B cell (primary cell): ENCODE measurements at regions of chr17 and their contacts with region 1.

Region 1: DNA sequence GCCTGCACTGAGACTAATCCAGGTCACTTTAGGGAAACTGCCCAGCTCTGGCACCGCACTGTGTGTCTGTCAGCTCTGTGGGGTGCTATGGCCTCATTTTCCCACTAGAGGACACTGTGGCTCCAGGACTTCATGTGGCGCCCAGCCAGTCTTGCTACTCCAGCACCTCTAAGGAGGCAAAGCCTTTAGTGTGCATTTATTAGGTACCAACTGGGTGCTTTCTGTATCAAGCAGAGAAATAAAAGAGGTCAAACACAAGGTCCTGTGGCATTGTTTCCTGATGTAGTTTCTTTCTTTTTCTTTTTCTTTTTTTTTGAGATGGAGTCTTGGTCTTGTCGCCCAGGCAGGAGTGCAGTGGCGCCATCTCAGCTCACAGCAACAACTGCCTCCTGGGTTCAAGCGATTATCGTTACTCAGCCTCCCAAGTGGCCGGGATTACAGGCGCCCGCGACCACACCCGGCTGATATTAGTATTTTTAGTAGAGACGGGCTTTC is 12.5 kb upstream of the RHBDL3 start:
- DNase-seq: peak; percentile 76
- ATAC-seq: peak; percentile 93
- H3K4me3 ChIP-seq: no peak overlapping the region
- H3K4me3 Mint-ChIP-seq: no peak overlapping the region
- H3K27ac ChIP-seq: no peak overlapping the region
- H3K27ac Mint-ChIP-seq: no peak overlapping the region
- H3K4me1 ChIP-seq: no peaks in the 10 kb centered on the region
- H3K4me1 Mint-ChIP-seq: no peaks in the 10 kb centered on the region
- H3K27me3 ChIP-seq: no peaks in the 10 kb centered on the region
- H3K27me3 Mint-ChIP-seq: peaks cover 13% of the 10 kb centered on the region
- CTCF ChIP-seq: peak; percentile 97

Region 2: DNA sequence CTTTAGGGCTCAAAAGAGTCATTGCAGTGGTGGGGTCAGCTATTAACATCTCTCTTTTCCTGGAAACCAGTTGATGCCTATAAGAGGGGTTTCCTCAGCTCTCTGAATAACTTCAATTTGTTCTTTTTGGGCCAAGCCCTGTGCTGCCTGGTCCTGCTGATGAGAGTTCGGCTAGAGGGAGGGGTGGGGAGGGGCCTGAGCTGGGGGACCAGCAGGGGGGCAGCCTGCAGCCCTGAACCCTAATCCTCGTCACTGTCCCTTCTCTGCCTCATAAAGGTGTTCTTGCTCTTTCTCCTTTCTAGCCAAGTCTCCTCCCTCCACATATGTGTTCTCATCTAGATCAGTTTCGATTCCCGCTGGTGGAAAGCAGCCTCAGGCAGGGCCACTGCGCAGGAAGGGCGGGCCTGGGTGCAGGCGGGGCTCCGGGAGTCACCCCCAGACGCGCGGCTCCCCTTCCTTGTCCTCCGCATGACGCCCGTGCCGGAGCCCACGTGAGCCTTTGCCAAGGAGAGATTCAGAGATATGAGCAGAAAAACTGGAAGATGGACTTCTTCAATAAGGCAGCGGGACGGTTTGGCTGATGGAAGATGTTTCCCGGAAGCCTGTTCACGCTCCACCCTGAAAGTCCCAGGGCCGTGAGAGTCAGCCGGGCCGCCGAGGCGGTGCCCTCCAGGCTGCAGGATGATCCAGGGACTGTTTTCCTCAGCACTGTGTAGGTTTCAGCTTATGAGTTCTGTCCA is 125.8 kb before region 1 on chr17:
- CTCF ChIA-PET with region 1: no interaction called
- POLR2A ChIA-PET with region 1: no interaction called
- intact Hi-C with region 1: no loop called
- DNase-seq: peak; percentile 79
- ATAC-seq: peak; percentile 96
- H3K4me3 ChIP-seq: peak overlapping the region; percentile 68 to 77 (median 70)
- H3K4me3 Mint-ChIP-seq: peak overlapping the region; percentile 90
- H3K27ac ChIP-seq: peak overlapping the region; percentile 54 to 74
- H3K27ac Mint-ChIP-seq: peak overlapping the region; percentile 90
- H3K4me1 ChIP-seq: peaks cover 14 to 18% of the 10 kb centered on the region in 2 donors
- H3K4me1 Mint-ChIP-seq: peaks cover 20% of the 10 kb centered on the region
- H3K27me3 ChIP-seq: no peaks in the 10 kb centered on the region
- H3K27me3 Mint-ChIP-seq: no peaks in the 10 kb centered on the region
- CTCF ChIP-seq: no peak

Region 3: GRCh38 chr17:32349854-32350665 is 96.9 kb after region 1 on chr17 and contains the start of gene ZNF207:
- CTCF ChIA-PET with region 1: no interaction called
- POLR2A ChIA-PET with region 1: no interaction called
- intact Hi-C with region 1: loop called (anchors 1 kb)
- DNase-seq: peak; percentile 98
- ATAC-seq: peak; percentile 98
- H3K4me3 ChIP-seq: peak within 1 kb of the TSS; percentile 56 to 97 (median 89)
- H3K4me3 Mint-ChIP-seq: peak within 1 kb of the TSS; percentile 99
- H3K27ac ChIP-seq: peak within 1 kb of the TSS; percentile 86 to 98
- H3K27ac Mint-ChIP-seq: peak within 1 kb of the TSS; percentile 100
- H3K4me1 ChIP-seq: peaks cover 28 to 32% of the 10 kb centered on the region in 2 donors
- H3K4me1 Mint-ChIP-seq: peaks cover 35% of the 10 kb centered on the region
- H3K27me3 ChIP-seq: no peaks in the 10 kb centered on the region
- H3K27me3 Mint-ChIP-seq: no peaks in the 10 kb centered on the region
- CTCF ChIP-seq: no peak
- total RNA-seq, gene ZNF207: 314 and 332 TPM in 2 replicates

Region 4: GRCh38 chr17:32444308-32445073 is 191.3 kb after region 1 on chr17 and contains the start of gene PSMD11:
- CTCF ChIA-PET with region 1: interaction called, 3 read pairs
- POLR2A ChIA-PET with region 1: no interaction called
- intact Hi-C with region 1: loop called (anchors 5 kb)
- DNase-seq: peak; percentile 98
- ATAC-seq: peak; percentile 98
- H3K4me3 ChIP-seq: peak within 1 kb of the TSS; percentile 78 to 96 (median 95)
- H3K4me3 Mint-ChIP-seq: peak within 1 kb of the TSS; percentile 86
- H3K27ac ChIP-seq: peak within 1 kb of the TSS; percentile 48 to 89
- H3K27ac Mint-ChIP-seq: peak within 1 kb of the TSS; percentile 90
- H3K4me1 ChIP-seq: peaks cover 18 to 23% of the 10 kb centered on the region in 2 donors
- H3K4me1 Mint-ChIP-seq: peaks cover 34% of the 10 kb centered on the region
- H3K27me3 ChIP-seq: peaks cover 0 to 2% (median under 1%) of the 10 kb centered on the region in 4 experiments
- H3K27me3 Mint-ChIP-seq: no peaks in the 10 kb centered on the region
- CTCF ChIP-seq: peak; percentile 46
- total RNA-seq, gene PSMD11: 73.4 and 78.7 TPM in 2 replicates

Region 5: GRCh38 chr17:32755045-32755805 is 502.1 kb after region 1 on chr17:
- CTCF ChIA-PET with region 1: no interaction called
- POLR2A ChIA-PET with region 1: no interaction called
- intact Hi-C with region 1: loop called (anchors 10 kb)
- DNase-seq: peak; percentile 62
- ATAC-seq: peak; percentile 41
- H3K4me3 ChIP-seq: no peak overlapping the region
- H3K4me3 Mint-ChIP-seq: no peak overlapping the region
- H3K27ac ChIP-seq: no peak overlapping the region
- H3K27ac Mint-ChIP-seq: no peak overlapping the region
- H3K4me1 ChIP-seq: no peaks in the 10 kb centered on the region
- H3K4me1 Mint-ChIP-seq: no peaks in the 10 kb centered on the region
- H3K27me3 ChIP-seq: no peaks in the 10 kb centered on the region
- H3K27me3 Mint-ChIP-seq: no peaks in the 10 kb centered on the region
- CTCF ChIP-seq: peak; percentile 64